ENCODE measurements at regions of chr22 and their contacts with region 1.

Region 1: GRCh38 chr22:48886604-48887393 is 940.9 kb downstream of the BRD1 start:
- DNase-seq: peak; percentile 80

Region 2: DNA sequence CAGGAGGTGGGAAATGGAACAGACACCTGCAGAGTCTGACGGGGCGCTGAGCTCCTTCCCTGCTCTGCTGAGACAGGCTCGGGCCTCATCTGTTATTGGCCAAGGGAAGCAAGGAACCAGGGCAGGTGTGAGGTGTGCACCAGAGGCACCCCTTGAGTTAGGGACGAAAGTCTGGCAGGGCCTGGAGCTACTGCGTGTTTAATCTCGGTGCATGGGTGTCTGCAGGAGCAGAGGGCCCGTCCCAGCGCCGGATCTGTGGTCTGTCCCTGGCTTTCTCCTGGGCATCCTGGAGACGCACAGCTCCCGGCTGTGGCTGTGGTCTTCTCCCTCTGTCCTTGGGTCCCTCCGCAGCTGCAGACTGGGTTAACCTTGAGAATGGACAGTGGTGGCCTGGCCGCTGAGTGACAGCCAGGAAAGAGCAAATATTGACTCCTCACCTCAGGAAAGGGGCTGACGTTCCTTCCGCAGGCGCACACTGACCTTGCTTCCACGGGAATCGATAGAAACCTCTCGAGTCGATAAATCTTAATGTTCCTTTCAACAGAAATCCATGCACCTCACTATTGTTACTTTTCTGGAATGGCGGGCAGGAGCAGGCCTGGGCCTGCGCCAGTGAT is 34.8 kb before region 1 on chr22:
- intact Hi-C with region 1: loop called in 1 of 2 experiments (anchors 1 kb)
- DNase-seq: peak; percentile 72

Measured in posterior vena cava (tissue), 2 donors.